Activated CD4-positive, alpha-beta memory T cell treated with anti-CD3 and anti-CD28 coated beads, Interleukin-2, amount 10 ng/mL, durations not matched to agents 7 days and 5 days (primary cell): ENCODE measurements at regions of chr7 and their contacts with region 1.

Region 1: DNA sequence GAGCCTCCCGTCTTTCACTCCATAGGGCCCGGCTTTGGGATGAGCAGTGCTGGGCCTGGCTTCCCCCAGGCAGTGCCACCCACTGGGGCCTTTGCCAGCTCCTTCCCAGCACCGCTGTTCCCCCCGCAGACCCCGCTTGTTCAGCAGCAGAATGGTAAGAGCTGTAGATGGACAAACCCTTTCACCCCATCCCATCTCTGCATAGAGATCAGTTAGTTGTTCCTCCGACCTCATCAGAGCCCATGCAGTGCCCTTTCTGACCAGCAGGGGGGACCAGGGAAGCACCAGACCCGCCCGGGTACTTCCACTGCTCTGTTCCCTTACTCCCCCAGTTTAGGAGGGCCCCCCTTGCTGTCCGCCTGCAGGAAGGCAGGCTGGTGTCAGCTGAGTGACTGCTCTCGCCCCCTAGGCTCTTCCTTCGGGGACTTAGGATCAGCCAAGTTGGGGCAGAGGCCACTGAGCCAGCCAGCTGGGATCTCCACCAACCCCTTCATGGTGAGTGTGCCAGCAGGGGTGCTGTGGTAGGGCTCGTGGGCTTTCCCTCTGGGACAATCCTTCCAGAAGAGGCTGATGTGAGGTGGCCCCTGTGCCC is 9.8 kb downstream of the SAP25 start:
- DNase-seq: peak; percentile 83
- H3K4me3 Mint-ChIP-seq: no peak overlapping the region
- H3K27ac Mint-ChIP-seq: peak overlapping the region; percentile 49
- H3K4me1 Mint-ChIP-seq: peaks cover 28% of the 10 kb centered on the region
- H3K27me3 Mint-ChIP-seq: no peaks in the 10 kb centered on the region

Region 2: GRCh38 chr7:100469227-100470044 is 94.5 kb before region 1 on chr7:
- CTCF ChIA-PET with region 1: interaction called, 18 read pairs
- POLR2A ChIA-PET with region 1: interaction called, 5 read pairs
- DNase-seq: peak; percentile 83
- H3K4me3 Mint-ChIP-seq: no peak overlapping the region
- H3K27ac Mint-ChIP-seq: peak overlapping the region; percentile 26
- H3K4me1 Mint-ChIP-seq: peaks cover 24% of the 10 kb centered on the region
- H3K27me3 Mint-ChIP-seq: no peaks in the 10 kb centered on the region

Region 3: DNA sequence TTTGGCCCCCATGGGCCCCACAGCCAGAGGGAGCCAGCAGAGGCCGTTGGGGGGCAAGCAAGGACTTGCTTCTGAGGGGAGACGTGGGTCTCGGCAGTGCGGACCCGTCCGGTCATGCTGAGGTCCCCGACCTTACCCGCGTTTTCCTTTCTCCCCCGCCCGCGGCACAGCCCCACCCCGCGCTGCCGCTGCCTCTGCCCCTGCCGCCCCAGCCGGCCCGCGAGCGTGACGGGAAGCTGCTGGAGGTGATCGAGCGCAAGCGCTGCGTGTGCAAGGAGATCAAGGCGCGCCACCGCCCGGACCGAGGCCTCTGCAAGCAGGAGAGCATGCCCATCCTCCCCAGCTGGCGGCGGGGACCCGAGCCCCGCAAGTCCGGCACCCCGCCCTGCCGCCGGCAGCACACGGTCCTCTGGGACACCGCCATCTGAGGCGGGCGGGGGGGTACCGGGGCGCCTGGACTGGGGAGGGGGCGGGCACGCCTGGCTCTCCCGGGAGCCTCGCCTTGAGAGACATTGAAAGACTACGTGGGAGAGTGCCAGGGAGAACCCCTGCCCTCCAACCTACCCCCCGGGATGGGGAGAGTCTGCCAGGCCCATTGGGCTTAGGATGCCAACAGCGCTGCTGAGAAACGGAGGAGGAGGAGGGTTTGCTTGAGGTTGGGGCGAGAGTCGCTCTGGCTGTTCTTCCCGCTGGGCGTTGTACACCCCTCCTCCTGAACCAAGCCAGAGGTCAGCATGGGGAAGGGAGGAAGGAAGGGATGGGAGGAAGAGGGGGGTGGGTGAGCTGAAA is 70.2 kb before region 1 on chr7:
- CTCF ChIA-PET with region 1: interaction called, 11 read pairs
- POLR2A ChIA-PET with region 1: interaction called, 3 read pairs
- DNase-seq: peak; percentile 66
- H3K4me3 Mint-ChIP-seq: peak overlapping the region; percentile 48
- H3K27ac Mint-ChIP-seq: no peak overlapping the region
- H3K4me1 Mint-ChIP-seq: peaks cover 13% of the 10 kb centered on the region
- H3K27me3 Mint-ChIP-seq: peaks cover 17% of the 10 kb centered on the region

Region 4: DNA sequence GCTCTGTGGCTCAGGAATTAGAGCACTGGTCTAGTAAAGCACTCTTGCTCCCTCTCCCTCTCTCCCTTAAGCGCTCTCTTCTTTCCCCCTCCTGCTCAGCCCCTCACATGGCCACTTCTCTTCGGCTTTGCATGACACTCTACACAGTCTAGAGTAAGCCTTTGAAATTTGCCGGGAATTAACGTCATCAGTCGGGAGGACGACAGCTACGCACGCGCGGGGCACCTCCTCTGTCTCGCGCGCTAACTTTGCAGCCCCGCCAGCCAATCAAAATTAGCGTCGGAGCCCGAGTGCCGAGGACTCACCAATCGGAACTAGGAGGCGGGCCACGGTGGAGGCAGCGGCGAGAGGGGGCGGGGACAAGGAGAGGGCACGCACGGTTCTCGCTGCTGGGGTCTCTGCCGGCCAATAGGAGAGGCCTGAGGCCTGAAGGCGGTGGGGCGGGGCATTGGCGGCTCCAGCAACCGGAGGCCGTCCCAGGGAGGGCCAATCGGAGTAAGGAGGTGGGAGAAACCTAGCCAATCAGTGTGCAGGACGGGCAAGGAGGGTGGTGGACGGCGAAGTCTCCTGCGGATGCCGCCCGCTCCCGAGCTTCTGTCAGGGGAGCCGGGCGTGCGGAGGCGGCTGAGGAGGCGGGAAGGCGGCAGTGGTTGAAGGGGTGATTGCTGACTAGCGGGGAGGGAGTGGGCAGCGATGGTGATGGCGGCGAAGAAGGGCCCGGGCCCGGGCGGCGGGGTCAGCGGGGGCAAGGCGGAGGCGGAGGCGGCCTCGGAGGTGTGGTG is 25.1 kb before region 1 on chr7 and contains the start of gene AGFG2:
- CTCF ChIA-PET with region 1: interaction called, 144 read pairs
- POLR2A ChIA-PET with region 1: interaction called, 11 read pairs
- DNase-seq: peak; percentile 100
- H3K4me3 Mint-ChIP-seq: peak within 1 kb of the TSS; percentile 97
- H3K27ac Mint-ChIP-seq: peak within 1 kb of the TSS; percentile 87
- H3K4me1 Mint-ChIP-seq: peaks cover 49% of the 10 kb centered on the region
- H3K27me3 Mint-ChIP-seq: no peaks in the 10 kb centered on the region
- total RNA-seq, gene AGFG2: 53.9 to 59.8 TPM

Region 5: DNA sequence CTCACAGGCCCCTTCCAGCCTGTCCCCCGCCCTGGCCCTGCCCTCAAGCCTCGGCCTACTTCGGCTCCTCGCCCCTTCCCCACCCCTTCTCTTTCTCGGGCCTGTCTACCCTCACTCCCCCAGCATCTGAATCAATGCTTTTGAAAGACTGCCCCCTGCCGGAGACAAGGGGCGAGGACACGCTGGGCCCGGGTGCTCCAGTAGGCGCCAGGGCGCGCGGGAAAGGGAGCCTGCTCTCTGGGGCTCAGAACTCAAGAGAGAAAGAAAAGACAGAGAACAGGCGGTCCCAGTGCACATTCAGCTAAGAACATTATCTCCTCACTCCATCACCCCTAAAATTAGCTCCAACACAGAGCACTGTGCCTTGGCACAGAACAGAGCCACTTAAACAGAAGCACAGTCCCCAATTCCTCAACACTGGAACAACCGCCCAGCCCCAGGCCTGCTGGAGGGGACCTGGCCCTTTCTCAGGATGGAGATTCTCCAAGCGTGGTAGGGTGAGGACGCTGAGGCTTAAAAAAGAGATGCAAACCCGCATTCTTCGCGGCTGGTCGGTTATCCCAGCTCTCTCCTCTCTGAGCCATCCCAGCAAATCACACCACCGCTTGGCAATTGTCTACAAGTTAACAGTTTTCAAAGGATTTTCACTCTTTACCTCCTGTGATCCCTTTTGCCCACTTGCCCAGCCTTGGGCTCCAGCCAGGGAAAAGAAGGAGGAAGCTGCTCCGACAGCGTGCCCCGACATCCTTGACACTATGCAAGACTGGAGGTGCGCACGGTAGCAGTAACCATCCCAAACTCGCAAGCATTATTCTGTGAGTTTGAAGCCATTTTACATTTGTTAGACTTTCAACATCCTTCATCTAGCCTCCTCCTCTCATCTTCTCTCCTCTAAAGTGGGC is 128.0 kb after region 1 on chr7:
- CTCF ChIA-PET with region 1: interaction called, 31 read pairs
- POLR2A ChIA-PET with region 1: interaction called, 3 read pairs
- DNase-seq: peak; percentile 84
- H3K4me3 Mint-ChIP-seq: peak overlapping the region; percentile 96
- H3K27ac Mint-ChIP-seq: peak overlapping the region; percentile 42
- H3K4me1 Mint-ChIP-seq: peaks cover 37% of the 10 kb centered on the region
- H3K27me3 Mint-ChIP-seq: peaks cover 10% of the 10 kb centered on the region